ENCODE measurements at regions of chr4 and their contacts with region 1.

Region 1: GRCh38 chr4:146522098-146522868 is 543 bp upstream of the SLC10A7 start:
- DNase-seq: peak; percentile 88
- H3K4me3 Mint-ChIP-seq: no peak overlapping the region
- H3K27ac Mint-ChIP-seq: peak overlapping the region; percentile 54
- H3K4me1 Mint-ChIP-seq: peaks cover 24% of the 10 kb centered on the region
- H3K27me3 Mint-ChIP-seq: no peaks in the 10 kb centered on the region

Region 2: GRCh38 chr4:145487631-145488030 is 1034.7 kb before region 1 on chr4:
- CTCF ChIA-PET with region 1: no interaction called
- intact Hi-C with region 1: loop called (anchors 5 kb)
- DNase-seq: peak; percentile 55
- H3K4me3 Mint-ChIP-seq: no peak overlapping the region
- H3K27ac Mint-ChIP-seq: no peak overlapping the region
- H3K4me1 Mint-ChIP-seq: peaks cover 5% of the 10 kb centered on the region
- H3K27me3 Mint-ChIP-seq: peaks cover 14% of the 10 kb centered on the region

Region 3: DNA sequence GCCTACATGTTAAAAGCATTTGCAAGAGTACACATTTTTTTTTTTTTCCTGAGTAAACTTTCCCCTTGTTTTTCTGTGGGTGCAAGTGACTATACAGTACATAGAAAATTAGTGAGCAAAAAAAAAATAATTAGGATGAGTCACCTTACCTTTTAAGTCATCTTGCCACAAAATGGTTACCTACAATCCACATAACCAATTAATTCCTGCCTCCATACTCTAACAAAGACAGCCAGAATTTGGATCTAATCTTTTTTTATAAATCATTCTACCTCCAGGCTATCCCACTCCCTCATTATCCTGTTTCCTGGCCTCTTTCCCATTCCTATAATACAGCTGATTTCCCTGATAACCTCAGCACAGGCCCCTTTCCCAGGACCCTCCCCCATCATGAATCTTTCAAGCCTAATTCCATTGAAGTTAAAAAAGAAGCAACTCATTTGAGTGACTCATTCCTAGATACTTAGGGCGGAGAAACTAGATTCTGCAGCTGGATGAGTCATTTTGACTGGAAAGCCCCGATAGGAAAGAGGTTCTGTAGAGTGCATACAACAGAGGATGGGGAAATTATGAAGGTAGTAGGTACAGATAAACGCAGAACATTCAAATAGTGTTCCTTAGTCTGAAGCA is 714.1 kb before region 1 on chr4:
- CTCF ChIA-PET with region 1: no interaction called
- intact Hi-C with region 1: loop called (anchors 10 kb)
- DNase-seq: peak; percentile 74
- H3K4me3 Mint-ChIP-seq: peak overlapping the region; percentile 46
- H3K27ac Mint-ChIP-seq: peak overlapping the region; percentile 91
- H3K4me1 Mint-ChIP-seq: peaks cover 44% of the 10 kb centered on the region
- H3K27me3 Mint-ChIP-seq: no peaks in the 10 kb centered on the region

Region 4: GRCh38 chr4:146243141-146243882 is 279.0 kb before region 1 on chr4:
- CTCF ChIA-PET with region 1: no interaction called
- intact Hi-C with region 1: loop called (anchors 1 kb)
- DNase-seq: peak; percentile 71
- H3K4me3 Mint-ChIP-seq: peak overlapping the region; percentile 63
- H3K27ac Mint-ChIP-seq: peak overlapping the region; percentile 77
- H3K4me1 Mint-ChIP-seq: peaks cover 35% of the 10 kb centered on the region
- H3K27me3 Mint-ChIP-seq: peaks cover 3% of the 10 kb centered on the region

Region 5: DNA sequence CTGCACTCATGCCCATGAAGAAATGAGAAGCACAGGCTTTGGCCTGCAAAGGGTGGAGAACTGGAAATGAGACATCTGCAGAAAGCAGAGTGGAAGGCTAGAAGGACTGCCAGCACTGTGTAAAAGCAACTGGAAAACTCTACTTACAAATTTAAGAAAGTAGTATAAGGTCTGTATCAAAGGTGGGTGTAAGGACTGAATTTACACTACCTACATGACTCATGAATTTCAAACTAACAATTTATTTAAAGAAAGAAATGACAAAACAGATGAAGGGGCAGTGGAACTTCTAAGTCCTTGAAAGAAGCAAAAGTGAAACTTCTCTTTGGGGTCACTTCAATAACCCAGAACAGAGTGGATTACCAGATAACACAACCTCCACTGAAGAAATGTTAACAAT is 71.8 kb before region 1 on chr4:
- CTCF ChIA-PET with region 1: no interaction called
- intact Hi-C with region 1: loop called (anchors 2 kb)
- DNase-seq: peak; percentile 23
- H3K4me3 Mint-ChIP-seq: no peak overlapping the region
- H3K27ac Mint-ChIP-seq: peak overlapping the region; percentile 14
- H3K4me1 Mint-ChIP-seq: peaks cover 34% of the 10 kb centered on the region
- H3K27me3 Mint-ChIP-seq: no peaks in the 10 kb centered on the region

Region 6: GRCh38 chr4:146506272-146506671 is 16.0 kb before region 1 on chr4:
- CTCF ChIA-PET with region 1: no interaction called
- intact Hi-C with region 1: loop called (anchors 1 kb)
- DNase-seq: no peak
- H3K4me3 Mint-ChIP-seq: no peak overlapping the region
- H3K27ac Mint-ChIP-seq: no peak overlapping the region
- H3K4me1 Mint-ChIP-seq: peaks cover 8% of the 10 kb centered on the region
- H3K27me3 Mint-ChIP-seq: no peaks in the 10 kb centered on the region

Region 7: GRCh38 chr4:147617173-147617840 is 1095.0 kb after region 1 on chr4 and contains the start of gene TMEM184C:
- CTCF ChIA-PET with region 1: no interaction called
- intact Hi-C with region 1: loop called (anchors 1 kb)
- DNase-seq: peak; percentile 100
- H3K4me3 Mint-ChIP-seq: peak within 1 kb of the TSS; percentile 89
- H3K27ac Mint-ChIP-seq: peak within 1 kb of the TSS; percentile 93
- H3K4me1 Mint-ChIP-seq: peaks cover 23% of the 10 kb centered on the region
- H3K27me3 Mint-ChIP-seq: no peaks in the 10 kb centered on the region
- total RNA-seq, gene TMEM184C: 11.5 to 12.5 TPM